GM23248 (cell line): ENCODE measurements at regions of chr16 and their contacts with region 1.

Region 1: GRCh38 chr16:87420026-87420981 is 28.2 kb downstream of the MAP1LC3B start:
- DNase-seq: no peak
- H3K4me3 ChIP-seq: no peak overlapping the region
- H3K27ac ChIP-seq: no peak overlapping the region
- H3K4me1 ChIP-seq: no peaks in the 10 kb centered on the region
- H3K27me3 ChIP-seq: no peaks in the 10 kb centered on the region

Region 2: DNA sequence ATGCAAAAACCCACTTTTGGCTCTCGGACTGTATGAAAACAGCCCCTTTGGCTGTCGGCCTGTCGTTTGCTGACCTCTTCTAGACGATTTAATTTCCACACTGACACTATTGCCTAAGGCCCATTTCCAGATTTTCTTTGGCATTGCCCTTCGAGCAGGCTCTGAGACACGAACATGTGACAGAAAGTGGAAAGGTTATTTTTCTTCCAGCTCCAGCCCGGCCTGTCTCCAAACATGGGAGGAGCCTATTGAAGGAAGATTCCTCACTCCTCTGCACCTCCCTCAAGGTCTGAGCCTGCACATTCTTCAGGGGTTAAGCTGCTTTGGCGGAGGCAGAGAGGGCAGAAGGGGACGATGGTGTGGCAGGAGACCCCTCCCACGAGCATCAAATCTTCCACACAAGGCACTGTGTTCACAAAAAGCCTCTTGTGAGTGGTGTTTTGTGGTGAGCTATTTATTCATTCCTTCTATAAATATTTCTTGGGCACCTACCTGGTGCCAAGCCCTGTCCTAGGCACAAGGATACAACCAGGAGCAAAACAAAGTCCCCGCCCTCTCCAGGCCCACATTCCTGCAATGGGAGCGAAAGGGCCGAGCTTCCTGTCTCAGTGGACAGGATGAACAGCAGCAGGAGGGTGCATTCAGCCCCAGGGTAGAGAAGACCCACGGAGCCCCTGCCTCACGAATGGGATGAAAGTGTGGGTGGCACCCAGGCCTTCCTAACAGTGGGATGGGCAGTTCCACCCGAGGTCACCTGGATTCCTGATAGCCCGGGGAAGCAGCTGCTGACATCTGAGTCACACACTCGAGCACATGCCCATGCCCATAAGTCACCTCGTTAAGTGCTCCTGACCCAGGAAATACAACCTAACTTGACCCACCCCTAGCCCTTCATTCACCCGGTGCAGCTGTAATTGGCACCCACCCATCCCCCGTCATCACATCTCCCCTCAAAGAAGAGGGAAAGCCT is 995.6 kb before region 1 on chr16:
- in situ Hi-C with region 1: no loop called
- DNase-seq: peak; percentile 9
- H3K4me3 ChIP-seq: no peak overlapping the region
- H3K27ac ChIP-seq: no peak overlapping the region
- H3K4me1 ChIP-seq: no peaks in the 10 kb centered on the region
- H3K27me3 ChIP-seq: peaks cover 28% of the 10 kb centered on the region

Region 3: GRCh38 chr16:87297918-87298631 is 122.2 kb before region 1 on chr16:
- in situ Hi-C with region 1: no loop called
- DNase-seq: peak; percentile 54
- H3K4me3 ChIP-seq: no peak overlapping the region
- H3K27ac ChIP-seq: no peak overlapping the region
- H3K4me1 ChIP-seq: no peaks in the 10 kb centered on the region
- H3K27me3 ChIP-seq: no peaks in the 10 kb centered on the region

Region 4: GRCh38 chr16:87540945-87541877 is 120.9 kb after region 1 on chr16:
- in situ Hi-C with region 1: loop called (anchors 10 kb)
- DNase-seq: peak; percentile 88
- H3K4me3 ChIP-seq: peak overlapping the region; percentile 60
- H3K27ac ChIP-seq: peak overlapping the region; percentile 88
- H3K4me1 ChIP-seq: peaks cover 26% of the 10 kb centered on the region
- H3K27me3 ChIP-seq: no peaks in the 10 kb centered on the region

Region 5: GRCh38 chr16:87598431-87598830 is 178.1 kb after region 1 on chr16:
- in situ Hi-C with region 1: no loop called
- DNase-seq: peak; percentile 26
- H3K4me3 ChIP-seq: no peak overlapping the region
- H3K27ac ChIP-seq: no peak overlapping the region
- H3K4me1 ChIP-seq: no peaks in the 10 kb centered on the region
- H3K27me3 ChIP-seq: peaks cover 59% of the 10 kb centered on the region